Prostate gland (tissue), 2 donors: ENCODE measurements at regions of chr1 and their contacts with region 1.

Region 1: DNA sequence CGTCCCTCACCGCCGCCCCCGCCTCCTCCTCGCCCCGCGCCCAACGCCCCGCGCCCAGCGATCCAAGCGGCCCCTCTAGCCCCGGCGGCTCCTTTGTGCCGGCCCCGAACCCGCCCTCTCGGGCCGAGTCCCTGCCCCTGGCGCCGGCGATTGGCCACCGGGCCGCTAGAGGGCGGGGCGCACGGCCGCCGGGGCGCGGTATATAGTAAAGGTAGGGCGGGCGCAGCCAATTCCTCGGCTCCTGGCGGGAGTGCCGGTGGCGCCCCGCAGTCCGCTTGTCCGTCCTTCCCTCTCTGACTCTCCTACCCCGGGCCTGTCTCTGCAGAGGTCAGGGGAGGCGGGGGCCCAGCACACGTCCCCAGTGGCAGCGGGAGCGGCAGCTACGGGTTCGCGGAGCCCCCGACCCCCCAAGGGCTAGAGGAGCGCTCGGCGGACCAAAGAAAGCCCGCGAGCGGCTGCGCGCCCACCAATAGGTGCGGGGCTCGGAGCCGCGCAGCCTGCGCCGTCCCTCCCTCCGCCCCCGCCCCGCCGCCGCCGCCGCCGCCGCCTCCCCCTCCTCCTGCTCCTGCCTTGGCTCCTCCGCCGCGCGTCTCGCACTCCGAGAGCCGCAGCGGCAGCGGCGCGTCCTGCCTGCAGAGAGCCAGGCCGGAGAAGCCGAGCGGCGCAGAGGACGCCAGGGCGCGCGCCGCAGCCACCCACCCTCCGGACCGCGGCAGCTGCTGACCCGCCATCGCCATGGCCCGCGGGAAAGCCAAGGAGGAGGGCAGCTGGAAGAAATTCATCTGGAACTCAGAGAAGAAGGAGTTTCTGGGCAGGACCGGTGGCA is at the start of gene ATP1B1:
- DNase-seq: peak; percentile 85
- H3K4me3 ChIP-seq: peak within 1 kb of the TSS; percentile 64 to 78
- H3K27ac ChIP-seq: peak within 1 kb of the TSS; percentile 73 to 83
- H3K4me1 ChIP-seq: peaks cover 6% of the 10 kb centered on the region
- H3K27me3 ChIP-seq: no peaks in the 10 kb centered on the region
- CTCF ChIP-seq: peak; percentile 75 to 93 (median 90)
- POLR2A ChIP-seq: peak; percentile 92
- total RNA-seq, gene ATP1B1: 59.4 to 139 TPM

Region 2: GRCh38 chr1:168585191-168585590 is 521.1 kb before region 1 on chr1:
- intact Hi-C with region 1: no loop called
- DNase-seq: no peak
- H3K4me3 ChIP-seq: no peak overlapping the region
- H3K27ac ChIP-seq: no peak overlapping the region
- H3K4me1 ChIP-seq: no peaks in the 10 kb centered on the region
- H3K27me3 ChIP-seq: no peaks in the 10 kb centered on the region
- CTCF ChIP-seq: no peak
- POLR2A ChIP-seq: no peak

Region 3: DNA sequence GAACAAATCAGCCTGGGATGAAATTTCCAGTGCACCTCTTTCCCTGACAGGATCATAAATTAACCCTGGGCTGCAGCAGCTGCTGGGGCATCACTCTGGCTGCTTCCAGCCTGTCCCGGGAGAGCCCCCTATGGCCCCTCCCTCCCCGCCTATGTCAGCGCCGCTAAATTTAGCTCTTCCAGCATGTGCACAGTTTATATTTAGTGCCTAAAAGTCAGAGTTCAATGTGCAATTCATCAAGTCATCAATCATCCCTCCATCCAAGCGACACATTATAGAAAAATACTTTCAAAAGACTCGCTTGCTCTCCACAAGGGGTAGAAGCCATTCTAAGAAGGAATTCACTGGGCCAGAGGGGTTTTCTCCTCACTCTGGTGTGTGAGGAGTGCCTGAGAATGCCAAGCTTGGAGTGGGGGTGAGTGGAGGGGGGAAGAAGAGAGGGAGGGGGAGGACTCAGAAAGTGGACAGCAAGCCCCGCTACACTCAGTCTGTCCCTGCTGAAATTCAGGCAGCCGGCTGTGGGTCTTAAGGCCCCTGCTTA is 492.5 kb before region 1 on chr1:
- intact Hi-C with region 1: loop called (anchors 2 kb)
- DNase-seq: no peak
- H3K4me3 ChIP-seq: no peak overlapping the region
- H3K27ac ChIP-seq: no peak overlapping the region
- H3K4me1 ChIP-seq: no peaks in the 10 kb centered on the region
- H3K27me3 ChIP-seq: no peaks in the 10 kb centered on the region
- CTCF ChIP-seq: no peak
- POLR2A ChIP-seq: no peak

Region 4: DNA sequence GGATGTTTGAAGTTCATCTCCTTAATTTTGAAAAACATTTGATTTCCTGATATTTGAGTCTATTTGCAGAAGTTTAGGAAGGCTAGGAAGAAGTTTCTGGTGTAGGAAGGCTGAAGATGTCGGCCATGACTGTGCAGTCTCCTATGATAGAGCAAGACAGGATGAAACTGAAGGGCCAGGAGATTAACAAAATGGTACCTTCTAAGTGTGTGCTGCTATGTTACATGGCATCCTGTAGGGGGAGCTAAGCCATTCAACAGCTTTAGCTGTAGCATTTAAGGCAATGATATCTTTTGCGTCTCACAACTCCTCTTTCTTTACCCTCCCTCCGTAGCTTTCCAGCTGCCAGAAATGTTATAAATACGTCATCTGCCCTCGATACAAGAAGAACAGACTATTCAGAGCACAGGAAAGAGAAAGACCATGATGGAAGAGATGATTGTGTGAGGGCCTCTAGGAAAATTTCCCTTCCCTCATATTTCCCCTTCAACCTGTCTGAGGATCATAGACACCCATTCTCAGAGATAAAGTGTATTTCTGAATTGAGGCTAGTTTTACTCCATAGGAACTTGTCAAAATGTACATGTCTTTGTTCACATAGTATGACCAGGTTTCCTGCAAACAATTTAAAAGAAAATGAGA is 468.8 kb before region 1 on chr1:
- intact Hi-C with region 1: loop called (anchors 5 kb)
- DNase-seq: no peak
- H3K4me3 ChIP-seq: no peak overlapping the region
- H3K27ac ChIP-seq: peak overlapping the region in 1 of 2 donors; percentile 23
- H3K4me1 ChIP-seq: no peaks in the 10 kb centered on the region
- H3K27me3 ChIP-seq: no peaks in the 10 kb centered on the region
- CTCF ChIP-seq: peak in 2 of 4 experiments; percentile 17 to 40
- POLR2A ChIP-seq: no peak

Region 5: GRCh38 chr1:168689726-168690602 is 416.3 kb before region 1 on chr1:
- intact Hi-C with region 1: loop called (anchors 10 kb)
- DNase-seq: no peak
- H3K4me3 ChIP-seq: no peak overlapping the region
- H3K27ac ChIP-seq: no peak overlapping the region
- H3K4me1 ChIP-seq: no peaks in the 10 kb centered on the region
- H3K27me3 ChIP-seq: no peaks in the 10 kb centered on the region
- CTCF ChIP-seq: no peak
- POLR2A ChIP-seq: no peak

Region 6: GRCh38 chr1:169155675-169156074 is 49.4 kb after region 1 on chr1:
- intact Hi-C with region 1: loop called (anchors 5 kb)
- DNase-seq: no peak
- H3K4me3 ChIP-seq: no peak overlapping the region
- H3K27ac ChIP-seq: no peak overlapping the region
- H3K4me1 ChIP-seq: no peaks in the 10 kb centered on the region
- H3K27me3 ChIP-seq: no peaks in the 10 kb centered on the region
- CTCF ChIP-seq: no peak
- POLR2A ChIP-seq: no peak

Region 7: GRCh38 chr1:169348383-169349036 is 242.2 kb after region 1 on chr1:
- intact Hi-C with region 1: loop called (anchors 5 kb)
- DNase-seq: peak; percentile 12
- H3K4me3 ChIP-seq: no peak overlapping the region
- H3K27ac ChIP-seq: no peak overlapping the region
- H3K4me1 ChIP-seq: no peaks in the 10 kb centered on the region
- H3K27me3 ChIP-seq: no peaks in the 10 kb centered on the region
- CTCF ChIP-seq: peak; percentile 74 to 88 (median 84)
- POLR2A ChIP-seq: no peak

Region 8: GRCh38 chr1:169390303-169390702 is 284.0 kb after region 1 on chr1:
- intact Hi-C with region 1: no loop called
- DNase-seq: no peak
- H3K4me3 ChIP-seq: no peak overlapping the region
- H3K27ac ChIP-seq: no peak overlapping the region
- H3K4me1 ChIP-seq: no peaks in the 10 kb centered on the region
- H3K27me3 ChIP-seq: no peaks in the 10 kb centered on the region
- CTCF ChIP-seq: no peak
- POLR2A ChIP-seq: no peak

Region 9: DNA sequence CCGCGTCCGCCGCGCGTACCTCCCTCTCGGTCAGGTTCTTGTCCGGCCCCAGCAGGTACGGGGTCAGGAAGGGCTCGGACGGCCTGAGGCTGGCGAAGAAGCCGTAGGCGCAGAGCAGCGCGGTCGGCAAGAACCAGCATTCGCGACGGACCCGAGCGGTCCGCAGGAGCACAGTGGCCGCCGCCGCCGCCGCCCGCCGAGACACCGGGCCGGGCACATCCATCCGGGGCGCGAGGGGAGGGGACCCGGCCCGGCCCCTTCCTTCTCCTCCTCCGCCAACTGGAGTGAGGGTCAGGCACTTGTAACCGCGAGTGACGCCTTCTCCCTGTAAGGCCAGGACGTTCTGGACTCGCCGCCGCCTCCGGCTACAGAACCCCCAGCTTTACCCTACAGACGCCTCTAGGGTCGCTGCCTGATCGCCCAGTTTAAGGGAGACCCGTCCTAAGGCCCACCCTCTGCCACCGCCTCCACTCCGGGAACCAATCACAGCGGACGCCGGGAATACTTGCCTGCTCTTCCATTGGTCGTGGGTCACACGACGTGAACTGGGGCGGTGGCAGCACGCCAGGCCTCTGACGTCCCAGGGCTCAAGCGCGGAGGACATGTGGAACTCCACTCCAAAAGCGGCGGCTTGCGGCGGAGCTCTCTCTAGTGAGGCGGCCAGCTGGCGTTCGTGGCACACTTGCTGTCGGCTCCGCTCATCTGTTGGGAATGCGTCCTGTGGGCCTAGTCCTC is 379.4 kb after region 1 on chr1 and contains the start of gene SLC19A2:
- intact Hi-C with region 1: loop called (anchors 5 kb)
- DNase-seq: peak; percentile 100
- H3K4me3 ChIP-seq: peak within 1 kb of the TSS; percentile 61 to 72
- H3K27ac ChIP-seq: peak within 1 kb of the TSS; percentile 95 to 96
- H3K4me1 ChIP-seq: no peaks in the 10 kb centered on the region
- H3K27me3 ChIP-seq: no peaks in the 10 kb centered on the region
- CTCF ChIP-seq: peak in 2 of 4 experiments; percentile 27 to 52
- POLR2A ChIP-seq: peak; percentile 93
- total RNA-seq, gene SLC19A2: 10.6 to 18.7 TPM